H1 (cell line): ENCODE measurements at regions of chr1 and their contacts with region 1.

Region 1: DNA sequence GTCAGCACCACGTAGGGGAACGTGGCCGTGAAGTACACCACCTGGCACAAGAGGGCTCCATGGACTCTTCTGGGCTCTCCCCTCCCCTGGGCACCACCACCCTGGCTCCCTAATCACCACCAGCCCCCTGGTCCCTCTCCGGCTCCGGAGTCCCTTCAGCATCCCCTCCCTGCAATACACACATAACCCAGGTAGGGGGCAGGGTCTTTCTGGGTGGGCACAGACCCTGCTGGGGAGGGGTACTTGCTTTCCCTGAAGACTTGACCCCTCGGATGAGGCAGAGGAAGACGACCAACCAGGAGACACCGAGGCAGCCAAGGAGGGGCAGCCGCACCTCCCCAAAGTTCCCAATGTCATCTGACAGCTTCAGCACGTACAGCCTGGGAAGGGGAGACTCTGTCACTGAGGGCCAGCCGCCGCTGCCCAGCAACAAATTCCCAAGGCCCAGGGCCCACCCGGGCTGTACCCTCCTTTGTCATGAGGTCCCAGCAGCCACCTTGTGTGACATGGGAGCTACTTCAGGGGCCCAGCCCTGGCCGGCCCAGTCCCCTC is 11.3 kb downstream of the CCDC24 start:
- DNase-seq: no peak
- H3K4me3 ChIP-seq: no peak overlapping the region
- H3K27ac ChIP-seq: no peak overlapping the region
- H3K4me1 ChIP-seq: no peaks in the 10 kb centered on the region
- H3K27me3 ChIP-seq: no peaks in the 10 kb centered on the region
- CTCF ChIP-seq: peak; percentile 39 to 59 (median 58)
- EP300 ChIP-seq: no peak
- POLR2A ChIP-seq: no peak
- RAD21 ChIP-seq: peak in 1 of 2 experiments; percentile 28; a peak in 1 of 4 replicates

Region 2: GRCh38 chr1:43946236-43947060 is 56.2 kb before region 1 on chr1 and contains the start of gene IPO13:
- CTCF ChIA-PET with region 1: interaction called, 27 read pairs
- POLR2A ChIA-PET with region 1: interaction called, 3 read pairs
- DNase-seq: peak; percentile 93 to 97
- H3K4me3 ChIP-seq: peak within 1 kb of the TSS; percentile 44 to 90 (median 76)
- H3K27ac ChIP-seq: peak within 1 kb of the TSS; percentile 99
- H3K4me1 ChIP-seq: peaks cover 0 to 17% (median 4%) of the 10 kb centered on the region in 4 experiments; a peak in 5 of 7 replicates
- H3K27me3 ChIP-seq: no peaks in the 10 kb centered on the region; a peak in 1 of 7 replicates
- CTCF ChIP-seq: peak; percentile 75 to 85 (median 82)
- EP300 ChIP-seq: no peak
- POLR2A ChIP-seq: no peak
- RAD21 ChIP-seq: peak; percentile 71 to 77
- total RNA-seq, gene IPO13: 20.7 and 23.0 TPM in 2 replicates

Region 3: GRCh38 chr1:43974443-43975248 is 28.0 kb before region 1 on chr1 and contains the start of gene ATP6V0B:
- CTCF ChIA-PET with region 1: interaction called, 23 read pairs
- POLR2A ChIA-PET with region 1: no interaction called
- DNase-seq: peak; percentile 69 to 97
- H3K4me3 ChIP-seq: peak within 1 kb of the TSS; percentile 79 to 88 (median 82)
- H3K27ac ChIP-seq: peak within 1 kb of the TSS; percentile 85
- H3K4me1 ChIP-seq: peaks cover 6 to 18% (median 12%) of the 10 kb centered on the region in 4 experiments
- H3K27me3 ChIP-seq: no peaks in the 10 kb centered on the region
- CTCF ChIP-seq: peak in 1 of 3 experiments; percentile 3; a peak in 2 of 4 replicates
- EP300 ChIP-seq: no peak
- POLR2A ChIP-seq: peak in 1 of 2 experiments; percentile 73; a peak in 2 of 3 replicates
- RAD21 ChIP-seq: no peak
- total RNA-seq, gene ATP6V0B: 105 and 106 TPM in 2 replicates

Region 4: DNA sequence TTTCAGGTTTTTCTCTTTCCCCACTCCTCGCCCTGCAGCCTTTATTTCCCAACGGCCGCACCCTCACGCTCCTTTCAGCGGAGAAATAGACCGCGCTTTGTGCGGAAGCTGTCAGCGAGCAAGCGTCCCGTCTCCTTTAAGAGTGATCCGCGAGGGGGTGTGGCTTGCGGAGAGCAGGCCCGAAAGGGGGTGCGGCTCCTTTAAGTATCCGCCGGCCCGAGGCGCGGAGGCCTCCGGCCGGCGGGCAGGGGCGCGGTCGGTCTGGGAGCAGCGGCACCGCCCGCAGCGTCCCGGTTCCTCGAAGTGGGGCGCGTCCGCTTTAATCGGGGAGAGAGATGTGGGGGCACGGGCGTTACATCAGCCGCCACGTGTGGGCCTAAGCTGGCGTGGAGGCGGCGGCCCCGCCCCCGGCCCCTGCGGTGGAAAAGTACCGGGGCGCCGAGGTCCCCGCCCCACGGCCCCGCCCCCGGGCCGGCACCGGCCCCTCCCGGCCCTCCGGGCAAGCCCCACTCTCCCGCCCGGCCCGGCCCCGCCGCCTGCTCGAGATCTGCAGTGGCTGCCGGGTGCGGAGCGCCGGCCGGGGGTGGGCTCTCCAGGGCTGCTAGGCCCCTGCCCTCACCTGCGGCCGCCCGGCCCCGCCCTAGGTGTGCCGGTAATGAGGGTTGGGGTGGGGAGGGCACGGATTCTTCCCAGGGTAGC is 27.4 kb after region 1 on chr1:
- CTCF ChIA-PET with region 1: interaction called, 252 read pairs
- POLR2A ChIA-PET with region 1: interaction called, 544 read pairs
- DNase-seq: peak in 1 of 2 experiments; percentile 92
- H3K4me3 ChIP-seq: peak overlapping the region; percentile 78 to 96 (median 86)
- H3K27ac ChIP-seq: peak overlapping the region; percentile 73; the same call in 1 of the 2 replicates
- H3K4me1 ChIP-seq: peaks cover 12 to 28% (median 18%) of the 10 kb centered on the region in 4 experiments
- H3K27me3 ChIP-seq: no peaks in the 10 kb centered on the region
- CTCF ChIP-seq: no peak
- EP300 ChIP-seq: peak in 1 of 2 experiments; percentile 3; a peak in 1 of 3 replicates
- POLR2A ChIP-seq: no peak; a peak in 1 of 3 replicates
- RAD21 ChIP-seq: no peak

Region 5: DNA sequence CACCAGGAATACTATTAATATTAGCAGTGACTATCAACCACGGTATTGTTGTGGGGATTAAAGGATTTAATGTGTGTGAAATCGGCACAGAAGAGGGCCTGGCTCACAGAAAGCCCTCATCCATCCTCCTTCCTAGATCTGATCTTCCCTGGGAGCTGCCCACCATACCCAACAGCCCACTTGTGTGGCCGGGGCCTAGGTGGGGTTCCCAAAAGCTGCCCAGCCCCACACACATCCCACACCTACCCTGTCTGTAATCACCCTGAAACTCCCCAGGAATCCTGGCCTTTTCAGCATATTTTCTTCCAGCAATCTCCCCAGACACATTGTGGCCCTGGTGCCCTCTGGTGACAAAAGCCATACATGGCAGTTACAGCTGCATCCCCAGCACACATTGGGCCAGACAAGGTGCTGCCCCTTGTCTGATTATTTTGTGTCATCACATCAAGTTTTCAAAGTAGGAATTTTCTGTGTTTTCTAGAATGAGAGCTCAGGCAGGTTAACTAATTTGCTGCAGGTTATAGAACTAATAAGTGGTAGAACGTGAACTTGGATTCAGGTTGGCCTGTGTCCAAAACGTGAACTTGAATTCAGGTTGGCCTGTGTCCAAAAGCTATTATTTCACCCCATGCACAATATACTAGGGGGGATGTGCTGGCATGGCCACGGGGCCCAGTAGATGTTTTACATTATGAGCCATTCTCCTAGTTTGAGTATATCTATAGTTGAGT is 33.9 kb after region 1 on chr1:
- CTCF ChIA-PET with region 1: interaction called, 478 read pairs
- POLR2A ChIA-PET with region 1: interaction called, 544 read pairs
- DNase-seq: peak; percentile 23 to 80
- H3K4me3 ChIP-seq: no peak overlapping the region
- H3K27ac ChIP-seq: no peak overlapping the region
- H3K4me1 ChIP-seq: peaks cover 6 to 20% (median 12%) of the 10 kb centered on the region in 4 experiments; a peak in 6 of 7 replicates
- H3K27me3 ChIP-seq: no peaks in the 10 kb centered on the region
- CTCF ChIP-seq: peak; percentile 90 to 92 (median 91)
- EP300 ChIP-seq: no peak
- POLR2A ChIP-seq: no peak
- RAD21 ChIP-seq: peak; percentile 81 to 88